GM12878 (cell line): ENCODE measurements at regions of chr5 and their contacts with region 1.

Region 1: DNA sequence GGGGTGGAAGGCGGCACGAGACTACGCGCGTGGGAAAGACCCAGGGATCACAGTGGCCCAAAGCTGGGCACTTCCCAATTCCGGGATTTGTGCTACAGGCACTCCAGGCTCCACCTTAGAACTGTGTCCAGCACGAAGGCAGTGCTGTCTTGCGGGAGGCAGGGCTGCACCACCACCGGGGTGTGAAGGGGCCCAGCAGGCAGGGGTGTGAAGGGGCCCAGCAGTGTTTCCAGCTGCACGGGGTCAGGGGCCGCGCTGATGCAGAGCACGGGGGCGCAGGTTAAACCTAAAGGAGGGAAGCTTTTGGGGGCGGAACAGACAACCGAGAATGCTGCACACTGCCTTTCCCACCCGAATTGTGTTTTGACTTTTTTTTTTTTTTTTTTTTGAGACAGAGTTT is 1.1 kb upstream of the PDCD6 start:
- DNase-seq: no peak
- ATAC-seq: no peak
- H3K4me3 ChIP-seq: no peak overlapping the region
- H3K27ac ChIP-seq: no peak overlapping the region
- H3K4me1 ChIP-seq: peaks cover 3% of the 10 kb centered on the region; the same call in 1 of the 2 replicates
- H3K27me3 ChIP-seq: no peaks in the 10 kb centered on the region
- CTCF ChIP-seq: no peak
- EP300 ChIP-seq: no peak
- POLR2A ChIP-seq: no peak
- RAD21 ChIP-seq: no peak

Region 2: GRCh38 chr5:188488-189481 is 81.6 kb before region 1 on chr5:
- CTCF ChIA-PET with region 1: interaction called, 4 read pairs
- POLR2A ChIA-PET with region 1: interaction called, 4 read pairs
- RAD21 ChIA-PET with region 1: interaction called, 11 read pairs
- SMC1A ChIA-PET with region 1: interaction called, 3 read pairs
- in situ Hi-C with region 1: no loop called
- intact Hi-C with region 1: no loop called
- DNase-seq: peak; percentile 28
- ATAC-seq: peak; percentile 95
- H3K4me3 ChIP-seq: no peak overlapping the region
- H3K27ac ChIP-seq: no peak overlapping the region
- H3K4me1 ChIP-seq: peaks cover 32% of the 10 kb centered on the region
- H3K27me3 ChIP-seq: no peaks in the 10 kb centered on the region; a peak in 2 of 4 replicates
- CTCF ChIP-seq: peak; percentile 85 to 97 (median 95)
- EP300 ChIP-seq: no peak
- POLR2A ChIP-seq: no peak
- RAD21 ChIP-seq: peak; percentile 70

Region 3: GRCh38 chr5:217860-218456 is 52.4 kb before region 1 on chr5 and contains the starts of genes CCDC127 and SDHA:
- CTCF ChIA-PET with region 1: no interaction called
- POLR2A ChIA-PET with region 1: interaction called, 21 read pairs
- RAD21 ChIA-PET with region 1: no interaction called
- SMC1A ChIA-PET with region 1: interaction called, 5 read pairs
- in situ Hi-C with region 1: no loop called
- intact Hi-C with region 1: loop called (anchors 2 kb)
- DNase-seq: peak; percentile 86
- ATAC-seq: peak; percentile 84
- H3K4me3 ChIP-seq: peak within 1 kb of the TSS; percentile 98
- H3K27ac ChIP-seq: peak within 1 kb of the TSS; percentile 69
- H3K4me1 ChIP-seq: peaks cover 7% of the 10 kb centered on the region
- H3K27me3 ChIP-seq: no peaks in the 10 kb centered on the region
- CTCF ChIP-seq: peak; percentile 30 to 39 (median 34); a peak in 5 of 6 replicates
- EP300 ChIP-seq: no peak
- POLR2A ChIP-seq: peak; percentile 87
- RAD21 ChIP-seq: no peak
- polyA plus RNA-seq, gene CCDC127: 2.8 to 3.8 TPM
- polyA plus RNA-seq, gene SDHA: 63.3 to 122 TPM

Region 4: GRCh38 chr5:231661-232060 is 38.7 kb before region 1 on chr5:
- CTCF ChIA-PET with region 1: interaction called, 4 read pairs
- POLR2A ChIA-PET with region 1: interaction called, 10 read pairs
- RAD21 ChIA-PET with region 1: no interaction called
- SMC1A ChIA-PET with region 1: no interaction called
- in situ Hi-C with region 1: no loop called
- intact Hi-C with region 1: no loop called
- DNase-seq: no peak
- ATAC-seq: no peak
- H3K4me3 ChIP-seq: no peak overlapping the region
- H3K27ac ChIP-seq: no peak overlapping the region
- H3K4me1 ChIP-seq: no peaks in the 10 kb centered on the region
- H3K27me3 ChIP-seq: no peaks in the 10 kb centered on the region
- CTCF ChIP-seq: no peak
- EP300 ChIP-seq: no peak
- POLR2A ChIP-seq: no peak
- RAD21 ChIP-seq: no peak

Region 5: GRCh38 chr5:257148-257547 is 13.2 kb before region 1 on chr5:
- CTCF ChIA-PET with region 1: no interaction called
- POLR2A ChIA-PET with region 1: no interaction called
- RAD21 ChIA-PET with region 1: no interaction called
- SMC1A ChIA-PET with region 1: no interaction called
- in situ Hi-C with region 1: no loop called
- intact Hi-C with region 1: no loop called
- DNase-seq: no peak
- ATAC-seq: no peak
- H3K4me3 ChIP-seq: no peak overlapping the region
- H3K27ac ChIP-seq: no peak overlapping the region
- H3K4me1 ChIP-seq: no peaks in the 10 kb centered on the region
- H3K27me3 ChIP-seq: no peaks in the 10 kb centered on the region
- CTCF ChIP-seq: no peak
- EP300 ChIP-seq: no peak
- POLR2A ChIP-seq: no peak
- RAD21 ChIP-seq: no peak

Region 6: GRCh38 chr5:298737-299125 is 28.4 kb after region 1 on chr5:
- CTCF ChIA-PET with region 1: no interaction called
- POLR2A ChIA-PET with region 1: no interaction called
- RAD21 ChIA-PET with region 1: no interaction called
- SMC1A ChIA-PET with region 1: no interaction called
- in situ Hi-C with region 1: no loop called
- intact Hi-C with region 1: no loop called
- DNase-seq: no peak
- ATAC-seq: no peak
- H3K4me3 ChIP-seq: no peak overlapping the region
- H3K27ac ChIP-seq: no peak overlapping the region
- H3K4me1 ChIP-seq: no peaks in the 10 kb centered on the region
- H3K27me3 ChIP-seq: no peaks in the 10 kb centered on the region
- CTCF ChIP-seq: no peak
- EP300 ChIP-seq: no peak
- POLR2A ChIP-seq: no peak
- RAD21 ChIP-seq: no peak